ENCODE measurements at regions of chr19 and their contacts with region 1.

Region 1: DNA sequence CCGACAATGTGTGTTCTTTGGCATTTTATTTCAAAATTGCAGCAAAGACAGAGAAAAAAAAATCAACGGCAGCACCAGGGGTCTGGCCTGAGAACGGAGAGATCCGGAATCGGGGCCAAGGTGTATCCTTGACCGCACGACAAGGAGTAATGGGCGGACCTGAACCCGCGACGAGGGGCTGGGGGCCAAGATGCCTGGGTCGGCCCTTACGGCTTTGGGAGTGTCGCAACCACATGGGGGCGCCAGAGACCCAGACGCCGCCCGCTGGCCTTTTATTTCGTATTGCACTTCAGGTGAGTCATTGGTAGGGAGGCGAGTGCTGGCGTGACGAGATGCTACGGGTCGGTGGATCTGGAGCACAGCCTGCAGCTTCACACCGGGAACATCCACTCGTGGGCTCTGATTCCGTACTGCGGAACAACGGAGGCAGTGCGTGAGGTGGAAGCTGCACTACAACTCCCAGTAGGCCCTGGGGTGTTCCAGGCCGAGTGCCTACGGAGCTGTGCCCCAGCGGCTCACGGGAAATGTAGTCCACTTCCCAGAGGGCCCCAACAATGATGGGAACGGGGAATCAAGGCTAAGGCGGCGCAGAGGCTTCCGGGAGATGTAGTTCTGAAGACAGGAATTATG is 15.7 kb downstream of the BCAT2 start:
- DNase-seq: peak; percentile 91
- H3K4me3 ChIP-seq: peak overlapping the region in 3 of 4 donors; percentile 24 to 56 (median 41)
- H3K27ac ChIP-seq: peak overlapping the region; percentile 72 to 88 (median 78)
- H3K4me1 ChIP-seq: peaks cover 0 to 15% (median 10%) of the 10 kb centered on the region in 4 donors
- H3K27me3 ChIP-seq: no peaks in the 10 kb centered on the region
- CTCF ChIP-seq: peak; percentile 92 to 99 (median 97)
- EP300 ChIP-seq: no peak
- POLR2A ChIP-seq: peak; percentile 24

Region 2: DNA sequence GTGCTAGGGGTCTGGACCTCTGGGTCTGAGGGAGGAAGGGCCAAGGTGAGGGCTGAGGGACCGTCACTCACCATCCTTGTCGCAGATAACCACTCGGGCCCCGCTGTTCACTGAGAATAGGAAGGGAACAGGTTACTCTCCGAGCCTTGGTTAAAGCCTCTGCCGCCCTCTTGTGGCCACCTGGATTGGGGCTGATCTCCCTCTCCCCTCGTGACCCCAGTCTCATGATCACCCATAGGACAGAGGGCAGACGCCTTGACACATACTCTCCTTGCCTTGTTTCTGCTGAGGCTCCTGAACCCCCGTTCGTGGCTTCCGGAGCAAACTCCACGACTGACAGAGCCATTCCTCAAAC is 40.5 kb after region 1 on chr19:
- in situ Hi-C with region 1: loop called in 3 of 4 experiments (anchors 5 kb)
- intact Hi-C with region 1: loop called (anchors 2 kb)
- DNase-seq: peak; percentile 96
- H3K4me3 ChIP-seq: peak overlapping the region; percentile 3 to 42 (median 20)
- H3K27ac ChIP-seq: peak overlapping the region; percentile 64 to 70 (median 68)
- H3K4me1 ChIP-seq: peaks cover 0 to 19% (median 9%) of the 10 kb centered on the region in 4 donors
- H3K27me3 ChIP-seq: no peaks in the 10 kb centered on the region
- CTCF ChIP-seq: peak; percentile 82 to 97 (median 89)
- EP300 ChIP-seq: no peak
- POLR2A ChIP-seq: peak; percentile 28

Region 3: DNA sequence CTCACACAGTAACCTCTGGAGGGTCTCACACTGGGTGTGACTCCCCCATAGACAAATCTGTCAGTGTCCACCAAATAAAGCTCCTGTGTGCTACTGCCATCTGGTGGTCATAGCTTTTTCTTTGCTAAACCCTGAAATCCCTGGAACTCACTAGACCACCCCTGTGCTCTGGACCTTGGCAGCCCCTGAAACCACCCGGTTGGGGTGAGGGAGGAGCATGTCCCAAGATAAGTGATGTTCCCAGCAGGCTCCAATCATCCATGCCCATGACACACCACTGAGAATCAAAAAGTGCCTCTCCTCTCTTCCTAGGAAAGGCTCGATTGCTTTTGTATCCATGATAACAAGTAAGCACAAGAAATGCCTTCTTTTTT is 47.6 kb after region 1 on chr19:
- in situ Hi-C with region 1: loop called in 3 of 4 experiments (anchors 5 kb)
- intact Hi-C with region 1: loop called (anchors 2 kb)
- DNase-seq: peak; percentile 34
- H3K4me3 ChIP-seq: no peak overlapping the region
- H3K27ac ChIP-seq: no peak overlapping the region
- H3K4me1 ChIP-seq: no peaks in the 10 kb centered on the region
- H3K27me3 ChIP-seq: no peaks in the 10 kb centered on the region
- CTCF ChIP-seq: peak; percentile 76 to 84 (median 80)
- EP300 ChIP-seq: no peak
- POLR2A ChIP-seq: no peak

Region 4: DNA sequence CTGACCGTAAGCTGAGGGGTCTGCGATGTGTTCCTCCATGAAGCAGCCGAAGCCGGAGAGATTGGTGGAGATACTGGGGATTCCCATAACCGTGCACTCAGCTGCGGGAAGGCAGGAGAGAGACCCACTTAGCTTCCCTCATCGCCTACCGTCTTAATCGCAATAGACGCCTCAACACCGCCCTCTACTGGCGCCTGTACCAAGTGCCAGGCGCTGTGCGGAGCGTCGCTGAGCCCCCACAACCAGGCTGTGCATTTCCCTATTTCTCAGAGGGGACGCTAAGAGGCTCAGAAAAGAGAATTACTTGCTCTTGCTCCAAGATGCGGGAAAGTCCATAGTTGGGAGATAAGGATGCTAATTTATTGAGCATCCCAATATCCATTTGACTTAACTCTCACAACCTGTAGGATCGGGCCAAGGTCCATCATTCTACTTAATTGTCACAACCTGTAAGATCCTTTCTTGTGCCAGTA is 175.8 kb after region 1 on chr19:
- in situ Hi-C with region 1: loop called in 1 of 4 experiments (anchors 5 kb)
- intact Hi-C with region 1: loop called (anchors 10 kb)
- DNase-seq: peak; percentile 86
- H3K4me3 ChIP-seq: no peak overlapping the region
- H3K27ac ChIP-seq: no peak overlapping the region
- H3K4me1 ChIP-seq: peaks cover 15 to 22% (median 17%) of the 10 kb centered on the region in 4 donors
- H3K27me3 ChIP-seq: no peaks in the 10 kb centered on the region
- CTCF ChIP-seq: peak; percentile 81 to 93 (median 92)
- EP300 ChIP-seq: no peak
- POLR2A ChIP-seq: no peak

Region 5: GRCh38 chr19:48993175-48994034 is 198.2 kb after region 1 on chr19 and contains the starts of genes GYS1 and RUVBL2:
- in situ Hi-C with region 1: no loop called
- intact Hi-C with region 1: loop called (anchors 2 kb)
- DNase-seq: peak; percentile 99
- H3K4me3 ChIP-seq: peak within 1 kb of the TSS; percentile 47 to 87 (median 54)
- H3K27ac ChIP-seq: peak within 1 kb of the TSS; percentile 89 to 96 (median 94)
- H3K4me1 ChIP-seq: peaks cover 16 to 36% (median 29%) of the 10 kb centered on the region in 4 donors
- H3K27me3 ChIP-seq: no peaks in the 10 kb centered on the region
- CTCF ChIP-seq: peak; percentile 97 to 100 (median 99)
- EP300 ChIP-seq: no peak
- POLR2A ChIP-seq: peak; percentile 92
- total RNA-seq, gene GYS1: 31.8 to 107 (median 40.9) TPM
- total RNA-seq, gene RUVBL2: 48.6 to 66.9 (median 59.4) TPM